MCF 10A (cell line): ENCODE measurements at regions of chr11 and their contacts with region 1.

Region 1: DNA sequence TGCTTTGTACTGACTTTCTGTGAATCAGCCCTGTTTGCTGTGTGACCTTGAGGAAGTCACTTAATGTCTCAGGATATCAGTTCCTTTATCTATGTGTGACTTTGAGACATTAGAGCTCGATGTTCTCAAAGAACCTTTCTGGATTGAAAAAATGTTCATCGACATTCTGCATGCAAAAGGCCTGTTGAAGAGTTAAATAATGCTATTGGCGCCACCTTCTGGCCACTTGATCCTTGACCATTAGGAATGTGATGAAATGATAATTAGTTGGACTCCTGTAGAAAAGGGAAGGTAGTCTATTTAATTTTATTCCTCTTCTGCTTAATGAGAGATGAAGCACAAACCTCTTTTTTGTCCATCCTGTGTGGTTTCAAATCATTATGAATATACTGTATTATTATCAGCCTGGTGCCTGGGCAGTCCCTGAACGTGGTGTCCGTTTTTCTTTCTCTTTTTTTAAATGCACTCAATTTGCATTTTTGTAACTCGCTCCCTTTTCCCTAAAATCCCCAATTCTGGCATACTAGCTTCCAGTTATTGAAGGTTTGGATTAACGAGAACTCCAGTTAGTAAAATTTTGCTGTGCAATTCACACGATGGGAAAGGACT is 20.7 kb downstream of the ELF5 start:
- DNase-seq: peak; percentile 76
- H3K4me3 Mint-ChIP-seq: no peak overlapping the region
- H3K27ac Mint-ChIP-seq: no peak overlapping the region
- H3K4me1 Mint-ChIP-seq: no peaks in the 10 kb centered on the region
- H3K27me3 Mint-ChIP-seq: no peaks in the 10 kb centered on the region
- CTCF ChIP-seq: peak; percentile 56

Region 2: DNA sequence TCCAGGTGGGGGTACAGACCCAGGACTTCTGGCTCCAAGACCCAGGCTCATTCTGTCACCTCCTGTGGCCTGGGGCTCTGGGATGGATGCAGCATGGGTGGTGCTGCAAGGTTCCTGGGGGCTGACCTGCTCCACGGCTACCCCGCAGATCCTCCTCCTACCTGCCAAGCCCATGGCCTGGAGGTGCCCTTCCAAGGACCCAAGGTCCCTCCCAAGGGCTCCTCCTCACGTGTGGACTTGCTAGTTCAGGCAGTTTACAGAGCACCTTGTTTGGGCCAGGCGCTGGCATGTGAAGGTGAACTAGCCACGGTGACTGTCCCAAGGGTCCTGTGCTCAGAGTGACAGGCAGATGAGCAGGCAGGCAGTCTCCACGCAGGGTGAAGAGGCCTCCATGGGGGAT is 329.4 kb before region 1 on chr11:
- CTCF ChIA-PET with region 1: no interaction called
- POLR2A ChIA-PET with region 1: no interaction called
- intact Hi-C with region 1: no loop called
- DNase-seq: no peak
- H3K4me3 Mint-ChIP-seq: no peak overlapping the region
- H3K27ac Mint-ChIP-seq: no peak overlapping the region
- H3K4me1 Mint-ChIP-seq: peaks cover 3% of the 10 kb centered on the region
- H3K27me3 Mint-ChIP-seq: no peaks in the 10 kb centered on the region
- CTCF ChIP-seq: no peak

Region 3: GRCh38 chr11:34468209-34468841 is 24.6 kb before region 1 on chr11:
- CTCF ChIA-PET with region 1: interaction called, 15 read pairs
- POLR2A ChIA-PET with region 1: interaction called, 4 read pairs
- intact Hi-C with region 1: no loop called
- DNase-seq: peak; percentile 57
- H3K4me3 Mint-ChIP-seq: no peak overlapping the region
- H3K27ac Mint-ChIP-seq: no peak overlapping the region
- H3K4me1 Mint-ChIP-seq: no peaks in the 10 kb centered on the region
- H3K27me3 Mint-ChIP-seq: no peaks in the 10 kb centered on the region
- CTCF ChIP-seq: peak; percentile 83

Region 4: DNA sequence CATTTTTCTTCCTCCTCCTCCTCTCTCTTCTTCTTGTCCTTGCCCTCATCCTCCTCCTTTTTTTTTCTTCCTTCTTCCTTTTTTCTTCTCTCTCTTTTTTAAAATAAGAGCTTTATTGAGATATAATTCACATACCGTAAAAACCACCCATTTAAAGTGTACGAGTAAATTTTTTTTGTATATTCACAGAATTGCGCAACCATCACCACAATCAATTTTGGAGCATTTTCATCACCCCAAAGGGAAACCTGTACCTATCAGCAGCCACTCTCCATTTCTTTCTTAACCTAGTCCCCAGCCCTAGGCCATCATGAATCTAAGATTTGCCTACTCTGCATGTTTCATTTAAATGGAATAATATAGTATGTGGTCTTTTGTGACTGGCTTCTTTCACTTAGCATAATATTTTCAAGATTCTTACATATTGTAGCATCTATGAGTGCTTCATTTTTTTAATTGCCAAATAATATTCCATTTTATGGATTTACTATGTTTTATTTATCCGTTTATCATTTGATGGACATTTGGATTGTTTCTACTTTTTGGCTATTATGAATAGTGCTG is 19.2 kb before region 1 on chr11:
- CTCF ChIA-PET with region 1: interaction called, 51 read pairs
- POLR2A ChIA-PET with region 1: no interaction called
- intact Hi-C with region 1: no loop called
- DNase-seq: no peak
- H3K4me3 Mint-ChIP-seq: no peak overlapping the region
- H3K27ac Mint-ChIP-seq: no peak overlapping the region
- H3K4me1 Mint-ChIP-seq: no peaks in the 10 kb centered on the region
- H3K27me3 Mint-ChIP-seq: no peaks in the 10 kb centered on the region
- CTCF ChIP-seq: no peak

Region 5: GRCh38 chr11:34480314-34480713 is 12.6 kb before region 1 on chr11:
- CTCF ChIA-PET with region 1: interaction called, 51 read pairs
- POLR2A ChIA-PET with region 1: interaction called, 7 read pairs
- intact Hi-C with region 1: no loop called
- DNase-seq: peak; percentile 65
- H3K4me3 Mint-ChIP-seq: no peak overlapping the region
- H3K27ac Mint-ChIP-seq: no peak overlapping the region
- H3K4me1 Mint-ChIP-seq: peaks cover 18% of the 10 kb centered on the region
- H3K27me3 Mint-ChIP-seq: no peaks in the 10 kb centered on the region
- CTCF ChIP-seq: no peak